Gastrocnemius medialis (tissue), 4 donors: ENCODE measurements at regions of chr1 and their contacts with region 1.

Region 1: DNA sequence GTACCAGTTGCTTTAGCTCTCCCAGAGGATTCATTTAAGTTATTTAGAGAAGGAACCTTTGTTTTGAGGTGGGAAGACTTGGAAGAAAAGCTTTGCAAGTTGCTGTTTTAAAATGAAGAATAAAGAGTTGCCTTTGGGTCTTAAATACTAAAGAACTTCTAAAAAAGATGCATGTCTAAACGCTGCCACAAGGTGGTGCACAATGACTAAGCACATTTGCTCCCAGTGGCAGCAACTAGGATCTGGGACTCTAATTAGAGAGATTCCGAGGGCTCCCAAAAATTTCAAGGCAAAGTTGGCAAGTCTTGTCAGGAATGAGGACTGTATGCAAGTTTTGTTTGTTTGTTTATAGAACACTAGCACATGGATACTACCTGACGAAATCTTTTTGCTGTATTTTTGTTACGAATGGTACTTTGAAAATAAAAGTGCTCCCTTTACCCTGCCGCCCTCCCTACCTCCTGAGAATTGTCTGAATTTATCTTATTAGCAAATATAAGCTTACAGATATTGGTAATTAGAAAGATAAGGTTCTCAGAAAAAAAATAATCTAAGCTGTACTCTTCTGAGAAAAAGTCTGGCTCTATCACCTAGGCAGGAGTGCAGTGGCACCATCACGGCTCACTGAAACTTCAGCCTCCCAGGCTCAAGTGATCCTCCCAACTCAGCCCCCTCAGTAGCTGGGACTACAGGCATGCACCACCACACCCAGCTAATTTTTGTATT is 121.8 kb downstream of the HFM1 start:
- DNase-seq: peak; percentile 41 to 47
- ATAC-seq: peak; percentile 86
- H3K4me3 ChIP-seq: peak overlapping the region; percentile 22 to 44 (median 32)
- H3K27ac ChIP-seq: peak overlapping the region; percentile 33 to 58 (median 46)
- H3K4me1 ChIP-seq: peaks cover 9 to 13% of the 10 kb centered on the region in 2 donors
- H3K27me3 ChIP-seq: no peaks in the 10 kb centered on the region
- CTCF ChIP-seq: peak; percentile 59 to 87 (median 80)
- POLR2A ChIP-seq: no peak

Region 2: GRCh38 chr1:90881034-90881433 is 401.8 kb before region 1 on chr1:
- in situ Hi-C with region 1: no loop called
- intact Hi-C with region 1: no loop called
- DNase-seq: no peak
- ATAC-seq: no peak
- H3K4me3 ChIP-seq: no peak overlapping the region
- H3K27ac ChIP-seq: no peak overlapping the region
- H3K4me1 ChIP-seq: no peaks in the 10 kb centered on the region
- H3K27me3 ChIP-seq: no peaks in the 10 kb centered on the region
- CTCF ChIP-seq: no peak
- POLR2A ChIP-seq: no peak

Region 3: GRCh38 chr1:91500756-91501522 is 218.1 kb after region 1 on chr1 and contains the start of gene CDC7:
- in situ Hi-C with region 1: no loop called
- intact Hi-C with region 1: loop called (anchors 10 kb)
- DNase-seq: peak; percentile 58 to 75
- ATAC-seq: peak; percentile 91 to 95
- H3K4me3 ChIP-seq: peak within 1 kb of the TSS; percentile 59 to 79 (median 72)
- H3K27ac ChIP-seq: peak within 1 kb of the TSS; percentile 61 to 75 (median 71)
- H3K4me1 ChIP-seq: peaks cover 7 to 15% of the 10 kb centered on the region in 2 donors
- H3K27me3 ChIP-seq: no peaks in the 10 kb centered on the region
- CTCF ChIP-seq: peak in 2 of 5 experiments; percentile 23 to 35
- POLR2A ChIP-seq: no peak
- total RNA-seq, gene CDC7: 0.10 to 0.44 (median 0.20) TPM in 3 of 4 donors, not detected in the other

Region 4: DNA sequence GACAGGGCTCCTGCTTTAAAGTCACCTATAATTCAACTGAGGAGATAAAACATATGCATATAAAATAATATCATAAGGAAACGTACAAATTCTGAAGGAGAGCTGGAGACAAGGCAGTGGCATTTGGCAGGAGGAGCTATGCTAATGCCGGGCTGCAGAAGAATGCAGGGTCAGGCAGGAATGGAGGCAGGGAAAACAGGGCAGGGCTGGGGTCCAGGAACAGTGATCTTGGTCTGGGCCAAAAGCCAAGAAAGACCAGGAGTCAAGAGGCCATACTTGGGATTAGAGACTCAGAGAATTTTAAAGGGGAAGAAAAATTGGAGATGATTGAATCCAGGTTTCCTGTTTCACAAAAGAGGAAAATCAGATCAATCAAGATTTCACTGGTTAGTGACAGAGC is 646.4 kb after region 1 on chr1:
- in situ Hi-C with region 1: loop called in 2 of 4 experiments (anchors 5 to 25 kb)
- intact Hi-C with region 1: loop called (anchors 5 kb)
- DNase-seq: no peak
- ATAC-seq: no peak
- H3K4me3 ChIP-seq: no peak overlapping the region
- H3K27ac ChIP-seq: no peak overlapping the region
- H3K4me1 ChIP-seq: no peaks in the 10 kb centered on the region
- H3K27me3 ChIP-seq: no peaks in the 10 kb centered on the region
- CTCF ChIP-seq: no peak
- POLR2A ChIP-seq: no peak

Region 5: DNA sequence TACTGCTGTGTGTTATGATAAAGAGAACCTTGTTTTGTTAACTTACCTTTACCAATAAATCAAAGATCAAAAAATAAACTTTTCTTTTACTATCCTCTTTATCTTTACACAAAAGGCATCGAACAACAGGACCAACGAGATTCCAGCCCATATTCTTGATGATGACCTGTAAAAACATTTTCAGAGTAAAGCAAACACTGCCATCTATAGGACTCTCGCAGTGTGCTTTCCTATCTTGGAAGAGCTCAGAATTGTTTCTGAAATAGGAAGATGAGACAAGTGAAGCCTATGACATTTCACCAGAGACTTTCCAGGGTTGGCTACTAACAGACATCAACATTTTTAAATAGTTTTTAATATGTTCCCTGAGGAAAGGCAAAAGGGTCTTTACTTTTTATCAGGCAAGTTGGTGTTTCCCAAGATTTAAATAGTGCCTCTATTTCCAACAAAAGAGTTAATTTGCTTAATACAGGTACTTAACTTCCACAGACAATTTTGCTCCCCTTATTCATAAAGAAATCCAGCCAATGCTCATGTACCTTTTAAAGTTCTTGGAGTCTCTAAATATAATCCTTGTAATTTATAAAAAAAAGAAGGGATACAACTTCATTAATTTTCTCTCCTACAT is 1008.6 kb after region 1 on chr1:
- in situ Hi-C with region 1: no loop called
- intact Hi-C with region 1: loop called (anchors 2 kb)
- DNase-seq: no peak
- ATAC-seq: peak in 1 of 2 donors; percentile 74
- H3K4me3 ChIP-seq: no peak overlapping the region
- H3K27ac ChIP-seq: no peak overlapping the region
- H3K4me1 ChIP-seq: peaks cover 0 to 4% of the 10 kb centered on the region in 2 donors
- H3K27me3 ChIP-seq: no peaks in the 10 kb centered on the region
- CTCF ChIP-seq: peak in 3 of 5 experiments; percentile 13 to 58 (median 50)
- POLR2A ChIP-seq: no peak